ENCODE measurements at regions of chr19 and their contacts with region 1.

Region 1: DNA sequence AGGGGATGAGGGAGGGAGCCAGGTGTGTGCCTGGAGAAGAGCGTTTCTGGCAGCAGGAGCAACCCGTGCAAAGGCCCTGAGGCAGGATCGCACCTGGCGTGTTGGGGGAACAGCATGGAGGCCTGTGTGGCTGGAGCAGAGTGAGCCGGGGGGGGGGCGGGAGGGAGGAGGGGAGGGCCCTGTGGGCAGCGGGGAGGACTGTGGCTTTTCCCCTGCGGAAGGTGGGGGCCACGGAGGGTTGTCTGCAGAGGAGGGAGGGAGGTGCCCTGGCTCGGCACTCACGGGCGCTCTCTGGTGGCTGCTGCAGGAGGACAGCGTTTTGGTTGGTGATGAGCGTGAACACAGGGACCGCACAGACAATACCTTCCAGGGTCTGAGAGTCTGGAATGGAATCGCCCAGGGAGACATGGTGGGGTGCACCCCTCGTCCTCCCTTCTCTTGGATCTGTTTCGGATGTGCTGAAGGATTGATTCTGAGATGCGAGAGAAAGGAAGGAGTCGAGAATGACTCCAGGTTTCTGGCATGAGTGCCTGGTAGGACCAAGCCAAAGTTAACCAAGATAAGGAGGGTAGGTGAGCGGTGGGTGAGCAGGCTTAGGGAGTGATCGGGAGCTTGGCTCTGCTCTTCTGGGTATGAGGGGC is 6.5 kb downstream of the RAB11B start:
- DNase-seq: no peak
- H3K4me3 ChIP-seq: no peak overlapping the region
- H3K27ac ChIP-seq: peak overlapping the region in 2 of 4 donors; percentile 38 to 47
- H3K4me1 ChIP-seq: peaks cover 68 to 76% (median 69%) of the 10 kb centered on the region in 4 donors
- H3K27me3 ChIP-seq: no peaks in the 10 kb centered on the region
- CTCF ChIP-seq: peak; percentile 52 to 67 (median 54)
- EP300 ChIP-seq: no peak
- POLR2A ChIP-seq: no peak

Region 2: GRCh38 chr19:8355631-8356402 is 40.9 kb before region 1 on chr19:
- intact Hi-C with region 1: loop called (anchors 1 kb)
- DNase-seq: no peak
- H3K4me3 ChIP-seq: no peak overlapping the region
- H3K27ac ChIP-seq: peak overlapping the region in 2 of 4 donors; percentile 13 to 35
- H3K4me1 ChIP-seq: peaks cover 23 to 39% (median 29%) of the 10 kb centered on the region in 4 donors
- H3K27me3 ChIP-seq: peaks cover 0 to 24% (median 0%) of the 10 kb centered on the region in 4 donors
- CTCF ChIP-seq: no peak
- EP300 ChIP-seq: no peak
- POLR2A ChIP-seq: no peak

Region 3: DNA sequence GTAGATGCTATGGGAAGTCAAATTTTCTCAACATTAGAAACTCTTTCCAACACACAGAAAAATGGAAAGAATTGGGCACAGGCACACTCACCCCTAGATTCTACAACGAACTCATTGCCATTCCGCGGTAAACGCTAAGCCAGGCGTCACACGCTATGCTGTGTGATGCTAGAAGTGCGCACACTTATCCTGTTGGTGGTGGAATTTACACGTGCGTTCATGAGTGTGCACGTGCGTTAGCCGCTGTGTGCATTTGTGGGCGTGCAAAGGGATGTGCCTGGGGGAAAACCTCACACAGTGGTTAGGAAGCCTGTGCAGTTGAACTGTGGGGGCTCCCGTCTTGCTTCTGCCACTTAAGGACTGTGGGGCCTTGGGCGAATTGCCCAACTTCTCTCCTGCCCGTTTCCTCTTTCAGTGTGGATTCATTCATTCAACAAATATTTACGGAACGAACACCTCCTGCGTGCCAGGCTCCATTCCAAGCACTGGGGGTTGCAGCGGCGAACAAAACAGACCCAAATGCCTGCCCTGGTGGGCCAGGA is 241.5 kb after region 1 on chr19:
- intact Hi-C with region 1: no loop called
- DNase-seq: no peak
- H3K4me3 ChIP-seq: no peak overlapping the region
- H3K27ac ChIP-seq: no peak overlapping the region
- H3K4me1 ChIP-seq: peaks cover 0 to 19% (median 6%) of the 10 kb centered on the region in 4 donors
- H3K27me3 ChIP-seq: peaks cover 0 to 4% (median 0%) of the 10 kb centered on the region in 4 donors
- CTCF ChIP-seq: no peak
- EP300 ChIP-seq: no peak
- POLR2A ChIP-seq: no peak